CD8-positive, alpha-beta T cell (primary cell): ENCODE measurements at regions of chr19 and their contacts with region 1.

Region 1: DNA sequence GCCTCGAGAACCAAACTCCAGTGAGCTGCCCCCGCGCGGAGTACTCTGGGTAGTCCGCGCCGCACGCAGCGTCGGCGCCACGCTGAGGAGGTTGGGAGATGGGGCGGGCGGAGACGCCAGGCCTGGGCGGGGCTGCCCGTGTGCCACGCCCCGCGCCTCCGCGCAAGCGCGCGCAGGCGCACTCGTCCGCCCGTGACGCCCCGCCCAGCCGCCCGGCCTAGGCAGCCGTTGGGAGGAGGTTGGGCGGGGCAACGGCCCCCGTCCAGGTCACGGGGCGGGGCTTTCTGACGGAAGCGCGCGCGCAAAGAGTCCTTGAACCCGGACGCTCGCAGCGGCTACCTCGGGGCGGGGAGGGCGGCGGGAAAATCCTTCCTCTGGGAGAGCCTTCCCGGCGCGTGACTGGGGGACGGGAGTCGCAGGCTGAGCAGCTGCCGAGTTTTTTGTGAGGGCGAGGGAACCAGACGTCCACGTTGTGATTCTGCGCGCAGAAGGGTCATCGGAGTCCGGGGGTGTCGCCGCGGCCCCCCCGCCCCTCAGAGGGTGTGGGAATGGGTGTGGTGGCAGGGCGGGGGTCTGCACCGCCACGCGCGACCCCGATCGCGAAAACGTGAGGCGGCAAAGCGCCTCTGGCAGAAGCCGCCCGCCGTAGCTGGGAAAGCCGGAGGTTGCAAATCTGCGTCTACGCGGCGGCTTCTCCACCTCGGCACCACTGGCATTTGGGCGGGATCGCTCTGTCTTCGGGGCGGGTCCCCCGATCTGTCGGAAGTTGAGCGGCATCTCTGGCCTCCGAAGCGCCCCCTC is at the start of gene MED26:
- DNase-seq: peak; percentile 91 to 99 (median 95)
- ATAC-seq: peak; percentile 89
- H3K4me3 ChIP-seq: peak within 1 kb of the TSS; percentile 89 to 100
- H3K4me3 Mint-ChIP-seq: peak within 1 kb of the TSS; percentile 99
- H3K27ac ChIP-seq: peak within 1 kb of the TSS; percentile 93 to 97
- H3K27ac Mint-ChIP-seq: peak within 1 kb of the TSS; percentile 98
- H3K4me1 ChIP-seq: peaks cover 17% of the 10 kb centered on the region
- H3K4me1 Mint-ChIP-seq: peaks cover 47% of the 10 kb centered on the region
- H3K27me3 ChIP-seq: no peaks in the 10 kb centered on the region
- H3K27me3 Mint-ChIP-seq: no peaks in the 10 kb centered on the region
- CTCF ChIP-seq: no peak
- total RNA-seq, gene MED26: 65.6 to 68.0 TPM

Region 2: GRCh38 chr19:16470911-16471811 is 157.2 kb before region 1 on chr19:
- CTCF ChIA-PET with region 1: no interaction called
- POLR2A ChIA-PET with region 1: no interaction called
- intact Hi-C with region 1: loop called (anchors 1 to 5 kb)
- DNase-seq: peak in 4 of 9 experiments; percentile 20 to 54 (median 39)
- ATAC-seq: peak; percentile 9
- H3K4me3 ChIP-seq: peak overlapping the region; percentile 50 to 69
- H3K4me3 Mint-ChIP-seq: peak overlapping the region; percentile 88
- H3K27ac ChIP-seq: peak overlapping the region in 1 of 2 experiments; percentile 33
- H3K27ac Mint-ChIP-seq: peak overlapping the region; percentile 57
- H3K4me1 ChIP-seq: peaks cover 21% of the 10 kb centered on the region
- H3K4me1 Mint-ChIP-seq: peaks cover 38% of the 10 kb centered on the region
- H3K27me3 ChIP-seq: no peaks in the 10 kb centered on the region
- H3K27me3 Mint-ChIP-seq: peaks cover 2% of the 10 kb centered on the region
- CTCF ChIP-seq: no peak

Region 3: DNA sequence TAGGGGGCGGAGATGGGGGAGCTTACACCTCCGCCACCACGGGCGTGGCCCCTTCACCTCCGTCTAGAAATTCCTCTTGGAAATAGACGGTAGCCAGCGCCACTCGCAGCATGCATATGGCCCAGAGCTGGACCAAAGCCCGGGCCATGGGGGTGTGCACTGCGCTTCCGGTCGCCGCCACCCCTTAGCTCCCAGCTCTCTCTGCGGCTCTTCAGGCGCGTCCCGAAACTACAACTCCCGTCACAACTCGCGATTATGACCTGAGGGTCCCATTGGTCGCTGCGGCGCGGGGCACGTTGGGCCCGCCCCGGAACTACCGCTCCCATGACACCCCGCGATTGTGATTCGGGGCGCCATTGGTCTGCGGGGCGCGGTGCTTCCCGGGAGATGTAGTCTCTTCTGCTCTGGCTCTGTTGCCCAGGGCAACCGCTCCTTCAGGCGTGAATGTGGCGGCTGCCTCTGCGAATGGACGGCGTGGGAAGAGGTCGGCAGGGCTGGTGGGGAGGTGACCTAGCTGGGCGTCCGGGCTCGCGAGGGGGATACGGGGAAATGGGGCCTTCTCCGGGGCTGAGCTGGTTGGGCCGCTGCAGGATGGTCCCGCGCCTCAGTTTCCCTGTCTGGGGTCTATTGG is 132.3 kb before region 1 on chr19 and contains the starts of genes C19orf44 and CALR3:
- CTCF ChIA-PET with region 1: no interaction called
- POLR2A ChIA-PET with region 1: no interaction called
- intact Hi-C with region 1: loop called (anchors 1 kb)
- DNase-seq: peak; percentile 92 to 98 (median 96)
- ATAC-seq: peak; percentile 99
- H3K4me3 ChIP-seq: peak within 1 kb of the TSS; percentile 66 to 89
- H3K4me3 Mint-ChIP-seq: peak within 1 kb of the TSS; percentile 94
- H3K27ac ChIP-seq: peak within 1 kb of the TSS; percentile 67 to 73
- H3K27ac Mint-ChIP-seq: peak within 1 kb of the TSS; percentile 86
- H3K4me1 ChIP-seq: peaks cover 11% of the 10 kb centered on the region
- H3K4me1 Mint-ChIP-seq: peaks cover 14% of the 10 kb centered on the region
- H3K27me3 ChIP-seq: no peaks in the 10 kb centered on the region
- H3K27me3 Mint-ChIP-seq: no peaks in the 10 kb centered on the region
- CTCF ChIP-seq: no peak
- total RNA-seq, gene C19orf44: 0.52 to 0.61 TPM
- total RNA-seq, gene CALR3: not detected

Region 4: GRCh38 chr19:16566161-16566560 is 62.2 kb before region 1 on chr19:
- CTCF ChIA-PET with region 1: no interaction called
- POLR2A ChIA-PET with region 1: interaction called, 7 read pairs
- intact Hi-C with region 1: loop called (anchors 1 kb)
- DNase-seq: peak; percentile 72 to 96 (median 82)
- ATAC-seq: peak; percentile 97
- H3K4me3 ChIP-seq: no peak overlapping the region
- H3K4me3 Mint-ChIP-seq: peak overlapping the region; percentile 73
- H3K27ac ChIP-seq: peak overlapping the region; percentile 49 to 66
- H3K27ac Mint-ChIP-seq: peak overlapping the region; percentile 99
- H3K4me1 ChIP-seq: peaks cover 21% of the 10 kb centered on the region
- H3K4me1 Mint-ChIP-seq: peaks cover 31% of the 10 kb centered on the region
- H3K27me3 ChIP-seq: no peaks in the 10 kb centered on the region
- H3K27me3 Mint-ChIP-seq: no peaks in the 10 kb centered on the region
- CTCF ChIP-seq: no peak

Region 5: DNA sequence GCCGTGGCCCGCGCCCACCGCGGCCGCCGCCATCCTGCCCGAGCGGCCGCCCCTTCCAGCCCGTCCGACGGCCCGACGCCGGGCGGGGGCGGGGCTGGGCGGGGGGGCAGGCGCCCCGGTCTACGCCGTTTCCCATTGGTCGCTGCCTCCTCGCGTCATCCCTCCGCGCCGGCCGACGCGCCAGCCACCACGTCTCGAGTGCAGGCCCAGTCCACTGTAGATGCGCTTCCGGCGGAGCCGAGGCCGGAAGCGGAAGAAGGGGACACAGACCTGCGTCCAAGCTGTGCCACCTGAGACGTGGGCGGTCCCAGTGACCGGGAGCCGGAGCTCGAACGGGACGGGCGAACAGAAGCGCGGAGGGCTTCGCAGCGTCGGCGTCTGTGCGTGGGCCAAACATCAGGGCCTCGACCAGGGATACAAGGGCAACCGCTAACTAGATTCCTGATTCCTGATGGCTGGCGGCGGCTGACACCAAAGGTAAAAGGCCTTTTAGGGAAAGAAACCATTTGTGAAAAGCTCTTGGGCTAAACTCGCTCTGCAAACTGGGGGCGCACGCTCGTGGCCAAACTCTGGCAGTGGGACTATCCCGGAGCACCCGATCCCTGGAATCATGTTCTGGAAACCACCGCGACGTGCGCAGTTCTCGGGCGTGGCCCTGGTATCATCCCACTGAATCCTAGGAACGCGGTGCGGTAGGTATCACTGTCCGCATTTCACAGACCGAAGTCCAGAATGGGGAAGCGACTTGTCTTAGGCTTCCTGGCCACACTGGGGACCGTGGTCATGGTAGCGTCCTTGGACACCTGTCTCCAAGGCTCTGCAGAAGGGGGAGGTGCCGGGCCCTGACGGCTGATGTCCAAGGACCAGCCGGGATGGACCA is 55.8 kb before region 1 on chr19 and contains the start of gene SLC35E1:
- CTCF ChIA-PET with region 1: no interaction called
- POLR2A ChIA-PET with region 1: interaction called, 11 read pairs
- intact Hi-C with region 1: loop called (anchors 1 kb)
- DNase-seq: peak; percentile 80 to 96 (median 89)
- ATAC-seq: peak; percentile 91
- H3K4me3 ChIP-seq: peak within 1 kb of the TSS; percentile 80 to 99
- H3K4me3 Mint-ChIP-seq: peak within 1 kb of the TSS; percentile 95
- H3K27ac ChIP-seq: peak within 1 kb of the TSS; percentile 92 to 99
- H3K27ac Mint-ChIP-seq: peak within 1 kb of the TSS; percentile 99
- H3K4me1 ChIP-seq: peaks cover 34% of the 10 kb centered on the region
- H3K4me1 Mint-ChIP-seq: peaks cover 50% of the 10 kb centered on the region
- H3K27me3 ChIP-seq: no peaks in the 10 kb centered on the region
- H3K27me3 Mint-ChIP-seq: no peaks in the 10 kb centered on the region
- CTCF ChIP-seq: no peak
- total RNA-seq, gene SLC35E1: 92.3 to 95.4 TPM

Region 6: DNA sequence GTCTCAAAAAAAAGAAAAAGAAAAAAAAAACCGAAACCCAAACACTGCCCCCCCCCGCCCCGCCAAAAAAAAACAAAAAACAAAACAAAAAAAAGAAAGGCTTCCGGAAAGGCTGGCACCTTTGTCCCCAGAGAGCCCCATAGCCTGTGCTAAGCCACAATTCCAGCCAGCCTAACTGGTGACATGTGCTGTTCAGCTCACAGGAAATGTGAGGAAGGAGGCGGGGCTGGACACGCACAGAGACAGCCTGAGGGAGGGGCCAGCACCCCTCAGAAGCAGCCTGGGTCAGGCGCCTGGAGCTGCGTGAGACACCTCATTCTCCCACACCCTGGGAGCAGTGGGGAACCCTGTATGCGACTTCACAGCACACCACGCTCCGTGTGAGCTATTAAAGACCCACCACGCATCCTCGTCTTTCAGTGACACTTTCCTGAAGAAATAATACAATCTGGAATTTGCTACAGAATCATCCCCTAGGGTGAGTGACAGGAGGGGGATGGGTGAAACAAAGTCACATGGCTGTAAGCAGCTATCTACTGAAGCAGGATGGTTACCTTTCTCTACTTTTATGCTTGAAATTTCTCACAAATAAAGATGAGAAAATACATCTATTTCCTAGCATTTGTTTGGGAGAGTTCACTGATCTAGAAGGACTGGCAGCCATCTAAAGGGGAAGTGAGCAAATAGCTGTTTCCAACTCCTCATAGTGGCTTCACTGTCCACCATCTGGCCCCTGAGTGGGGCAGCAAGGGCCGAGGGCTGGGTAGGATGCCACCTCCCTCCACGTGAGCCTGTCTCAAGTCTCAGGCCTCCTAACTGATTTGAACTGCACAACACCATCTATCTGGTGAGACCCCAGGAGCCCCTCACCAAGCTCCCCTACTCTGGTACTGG is 43.9 kb before region 1 on chr19:
- CTCF ChIA-PET with region 1: no interaction called
- POLR2A ChIA-PET with region 1: interaction called, 11 read pairs
- intact Hi-C with region 1: loop called (anchors 1 kb)
- DNase-seq: peak; percentile 77 to 99 (median 90)
- ATAC-seq: peak; percentile 80
- H3K4me3 ChIP-seq: peak overlapping the region; percentile 23 to 30
- H3K4me3 Mint-ChIP-seq: peak overlapping the region; percentile 70
- H3K27ac ChIP-seq: peak overlapping the region; percentile 18 to 84
- H3K27ac Mint-ChIP-seq: peak overlapping the region; percentile 94
- H3K4me1 ChIP-seq: peaks cover 76% of the 10 kb centered on the region
- H3K4me1 Mint-ChIP-seq: peaks cover 79% of the 10 kb centered on the region
- H3K27me3 ChIP-seq: no peaks in the 10 kb centered on the region
- H3K27me3 Mint-ChIP-seq: no peaks in the 10 kb centered on the region
- CTCF ChIP-seq: no peak